Common myeloid progenitor, CD34-positive (primary cell): ENCODE measurements at regions of chr17 and their contacts with region 1.

Region 1: GRCh38 chr17:48577946-48578615 is at the start of gene HOXB4:
- DNase-seq: peak; percentile 79 to 85 (median 84)
- H3K4me3 ChIP-seq: peak within 1 kb of the TSS; percentile 50 to 86 (median 75)
- H3K27ac ChIP-seq: peak within 1 kb of the TSS; percentile 54 to 91
- H3K4me1 ChIP-seq: peaks cover 7 to 88% (median 75%) of the 10 kb centered on the region in 4 experiments
- H3K27me3 ChIP-seq: no peaks in the 10 kb centered on the region

Region 2: DNA sequence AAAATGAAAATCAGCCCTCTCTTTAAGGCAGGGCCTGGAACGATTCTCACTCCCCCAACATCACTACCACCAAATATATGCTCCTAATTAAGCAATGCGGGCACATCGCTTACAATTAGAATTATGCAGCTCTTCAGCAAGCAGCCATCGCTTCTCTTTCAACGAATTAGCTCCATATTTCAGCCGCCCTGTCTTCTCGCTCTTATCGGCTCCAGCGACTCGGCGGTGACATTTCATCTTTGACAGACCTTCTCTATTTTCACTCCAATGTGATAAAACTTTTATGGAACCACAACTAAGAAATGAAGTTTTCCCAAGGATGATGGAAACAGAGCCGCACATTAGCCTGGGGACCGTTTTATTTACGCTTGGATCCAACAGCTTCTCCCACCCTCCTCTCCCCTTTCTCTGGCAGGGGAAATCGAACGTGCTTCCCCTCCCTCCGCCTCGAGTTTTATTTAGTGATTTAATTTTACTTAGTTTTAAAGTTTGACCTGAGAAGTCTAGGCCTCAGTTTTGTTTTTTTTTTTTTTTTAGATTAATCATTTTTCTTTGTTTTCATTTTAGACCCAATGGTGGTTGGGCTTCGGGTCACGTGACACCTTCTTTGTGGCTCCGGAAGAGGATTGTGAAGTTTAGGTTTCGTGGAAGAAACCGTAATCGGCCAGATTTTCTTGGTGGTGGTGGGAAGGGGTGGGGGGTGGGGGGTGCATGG is 30.1 kb before region 1 on chr17:
- CTCF ChIA-PET with region 1: interaction called, 15 read pairs
- POLR2A ChIA-PET with region 1: interaction called, 4 read pairs
- DNase-seq: peak; percentile 57 to 75 (median 74)
- H3K4me3 ChIP-seq: peak overlapping the region in 5 of 7 experiments; percentile 30 to 68 (median 49)
- H3K27ac ChIP-seq: peak overlapping the region; percentile 28 to 95
- H3K4me1 ChIP-seq: peaks cover 22 to 56% (median 47%) of the 10 kb centered on the region in 4 experiments
- H3K27me3 ChIP-seq: no peaks in the 10 kb centered on the region